ENCODE measurements at regions of chr18 and their contacts with region 1.

Region 1: DNA sequence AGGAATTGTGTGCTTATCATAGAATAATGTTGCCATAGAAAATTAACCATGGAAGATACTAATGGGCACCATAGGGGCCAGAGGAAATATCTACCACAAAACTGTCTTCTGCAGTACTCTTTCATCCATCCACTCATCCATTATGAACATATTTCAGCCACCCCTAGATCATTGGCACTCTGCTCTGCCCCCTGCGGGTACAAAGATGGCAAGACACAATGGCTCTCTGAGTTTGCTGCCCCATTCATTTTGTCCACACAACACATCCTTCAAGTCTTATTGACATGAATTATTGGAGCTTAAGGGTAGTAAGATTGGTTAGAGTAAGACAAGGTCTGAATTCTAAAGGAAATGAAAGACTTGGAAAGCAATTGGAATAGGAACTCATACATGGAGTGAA is 1224.7 kb upstream of the CELF4 start:
- DNase-seq: peak; percentile 21
- H3K4me3 ChIP-seq: no peak overlapping the region
- H3K27ac ChIP-seq: no peak overlapping the region
- H3K4me1 ChIP-seq: no peaks in the 10 kb centered on the region
- H3K27me3 ChIP-seq: no peaks in the 10 kb centered on the region
- CTCF ChIP-seq: peak; percentile 77 to 85

Region 2: DNA sequence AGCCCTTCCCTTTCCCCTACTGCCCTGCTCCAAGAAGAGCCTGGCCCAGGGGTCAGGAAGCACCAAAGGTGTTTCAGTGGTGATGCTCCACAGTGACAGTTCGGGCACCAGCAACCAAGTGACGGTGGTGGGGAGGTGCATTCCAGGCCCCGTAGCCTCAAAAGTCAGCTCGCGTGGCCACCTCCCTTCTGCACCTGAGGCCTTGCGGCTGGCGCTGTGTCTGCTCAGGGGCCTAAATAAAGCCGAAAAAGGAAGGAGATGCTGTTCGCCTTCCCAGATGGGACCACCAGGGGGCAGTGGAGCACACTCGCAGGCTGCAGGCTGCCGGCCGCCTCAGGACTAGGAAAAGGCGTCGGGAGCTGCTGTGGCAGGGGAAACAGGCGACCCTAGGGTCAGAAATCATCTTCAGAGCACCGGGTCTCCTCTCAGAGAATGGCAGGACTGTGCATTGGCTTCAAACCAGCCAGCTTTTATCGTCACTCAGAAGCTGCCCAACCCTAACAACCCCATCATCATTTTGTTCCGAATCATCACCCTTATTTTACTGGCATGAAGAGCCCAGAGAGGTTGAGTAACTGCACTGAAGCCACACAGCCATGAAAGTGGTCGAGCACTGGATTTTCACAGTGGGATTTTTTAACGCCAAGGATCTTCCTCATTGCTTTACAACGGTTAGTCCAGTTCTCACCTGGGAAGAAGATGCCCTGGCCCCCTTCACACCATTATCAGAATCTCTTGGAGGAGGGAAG is 1011.7 kb before region 1 on chr18:
- CTCF ChIA-PET with region 1: no interaction called
- dilution Hi-C with region 1: no loop called
- in situ Hi-C with region 1: no loop called
- intact Hi-C with region 1: loop called (anchors 5 kb)
- DNase-seq: peak; percentile 13
- H3K4me3 ChIP-seq: no peak overlapping the region
- H3K27ac ChIP-seq: no peak overlapping the region
- H3K4me1 ChIP-seq: no peaks in the 10 kb centered on the region
- H3K27me3 ChIP-seq: no peaks in the 10 kb centered on the region
- CTCF ChIP-seq: peak; percentile 53 to 74

Region 3: GRCh38 chr18:38115201-38115600 is 675.1 kb before region 1 on chr18:
- CTCF ChIA-PET with region 1: no interaction called
- dilution Hi-C with region 1: no loop called
- in situ Hi-C with region 1: no loop called
- intact Hi-C with region 1: loop called (anchors 10 kb)
- DNase-seq: no peak
- H3K4me3 ChIP-seq: no peak overlapping the region
- H3K27ac ChIP-seq: no peak overlapping the region
- H3K4me1 ChIP-seq: no peaks in the 10 kb centered on the region
- H3K27me3 ChIP-seq: peaks cover 4% of the 10 kb centered on the region
- CTCF ChIP-seq: no peak

Region 4: GRCh38 chr18:38545071-38545470 is 245.2 kb before region 1 on chr18:
- CTCF ChIA-PET with region 1: no interaction called
- dilution Hi-C with region 1: no loop called
- in situ Hi-C with region 1: loop called (anchors 10 kb)
- intact Hi-C with region 1: loop called (anchors 1 kb)
- DNase-seq: peak; percentile 77
- H3K4me3 ChIP-seq: no peak overlapping the region
- H3K27ac ChIP-seq: no peak overlapping the region
- H3K4me1 ChIP-seq: peaks cover 7% of the 10 kb centered on the region
- H3K27me3 ChIP-seq: no peaks in the 10 kb centered on the region
- CTCF ChIP-seq: peak; percentile 87 to 88

Region 5: DNA sequence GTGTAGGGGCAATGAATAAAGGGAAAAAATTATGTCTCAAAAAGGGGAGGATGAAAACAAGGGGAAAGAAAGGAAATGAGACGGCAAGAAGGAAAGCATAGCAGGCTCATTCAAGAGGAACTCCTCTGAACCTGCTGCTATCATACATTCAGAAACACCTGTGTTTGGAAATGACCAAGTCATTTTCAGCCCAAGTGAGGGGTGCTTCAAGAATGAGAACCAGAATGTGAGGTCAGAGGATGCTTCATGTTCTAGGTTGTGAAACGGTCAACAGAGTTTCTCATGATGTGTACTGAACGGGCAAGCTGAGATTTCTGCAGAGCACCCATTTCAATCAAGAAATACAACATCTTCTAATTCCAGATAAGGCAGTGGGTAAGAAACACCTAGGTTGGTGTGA is 142.4 kb after region 1 on chr18:
- CTCF ChIA-PET with region 1: no interaction called
- dilution Hi-C with region 1: no loop called
- in situ Hi-C with region 1: no loop called
- intact Hi-C with region 1: no loop called
- DNase-seq: no peak
- H3K4me3 ChIP-seq: no peak overlapping the region
- H3K27ac ChIP-seq: no peak overlapping the region
- H3K4me1 ChIP-seq: no peaks in the 10 kb centered on the region
- H3K27me3 ChIP-seq: no peaks in the 10 kb centered on the region
- CTCF ChIP-seq: no peak

Region 6: DNA sequence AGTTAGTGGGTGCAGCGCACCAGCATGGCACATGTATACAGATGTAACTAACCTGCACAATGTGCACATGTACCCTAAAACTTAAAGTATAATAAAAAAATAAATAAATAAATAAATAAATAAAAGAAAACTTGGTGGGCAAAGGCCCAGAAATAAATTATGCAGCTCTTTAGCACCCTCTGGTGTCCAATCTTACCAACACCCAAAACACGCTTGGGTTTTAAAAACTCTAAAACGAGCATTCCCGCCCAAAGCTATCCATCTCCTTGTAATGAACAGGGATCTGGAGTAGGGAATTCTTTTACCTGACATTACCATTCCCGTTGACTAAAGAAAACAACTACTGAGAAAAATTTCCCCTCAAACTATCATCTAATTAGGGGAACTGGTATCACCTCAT is 781.2 kb after region 1 on chr18:
- CTCF ChIA-PET with region 1: interaction called, 3 read pairs
- dilution Hi-C with region 1: no loop called
- in situ Hi-C with region 1: no loop called
- intact Hi-C with region 1: loop called (anchors 5 kb)
- DNase-seq: no peak
- H3K4me3 ChIP-seq: no peak overlapping the region
- H3K27ac ChIP-seq: no peak overlapping the region
- H3K4me1 ChIP-seq: no peaks in the 10 kb centered on the region
- H3K27me3 ChIP-seq: no peaks in the 10 kb centered on the region
- CTCF ChIP-seq: peak; percentile 12 to 47